Posterior cingulate gyrus (tissue), 11 donors: ENCODE measurements at regions of chrX and their contacts with region 1.

Region 1: DNA sequence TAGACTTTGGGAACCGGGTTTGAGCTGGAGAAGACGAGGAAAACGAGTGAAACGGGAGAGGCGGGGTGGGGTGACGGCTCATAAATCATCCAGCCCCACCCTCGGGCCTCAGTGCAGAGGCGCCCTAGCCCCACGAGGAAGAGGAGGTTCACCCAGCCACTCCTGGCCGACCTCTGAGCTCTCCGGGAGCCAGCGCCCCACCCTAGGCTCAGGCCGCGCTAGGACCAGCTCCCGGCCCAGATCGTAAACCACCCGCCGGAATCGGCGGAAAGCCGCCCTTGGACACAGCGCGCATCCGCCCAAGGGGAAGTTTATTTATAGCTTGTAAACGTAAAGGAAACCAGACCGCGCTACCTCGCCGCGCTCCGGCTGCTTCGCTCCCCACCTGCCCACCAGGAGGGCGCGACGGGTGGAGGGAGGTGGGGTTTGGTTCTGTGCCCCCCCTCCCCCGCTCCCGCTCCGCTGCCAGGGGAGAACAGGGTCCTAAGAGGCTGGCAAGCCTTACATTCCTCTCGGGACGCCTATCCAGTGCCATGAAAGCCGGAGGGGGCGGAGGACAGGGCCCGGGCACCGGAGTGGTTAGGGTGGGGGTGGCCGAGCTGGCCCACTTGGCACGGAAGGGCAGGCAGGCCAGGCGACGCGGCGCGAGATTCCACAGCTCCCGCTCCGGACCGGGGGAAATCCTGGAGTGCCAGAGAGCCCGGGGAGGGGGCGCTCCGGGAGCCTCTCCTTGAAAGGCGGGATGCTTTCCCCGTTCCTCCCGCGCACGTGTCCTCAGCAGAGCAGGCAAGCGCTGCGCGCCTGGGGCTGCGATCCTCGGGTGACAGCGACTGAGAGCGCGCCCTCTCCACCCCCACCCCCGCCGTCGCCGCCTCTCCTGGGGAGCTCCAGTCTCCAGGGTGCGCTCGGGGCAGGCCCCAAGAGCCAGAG is 84.2 kb downstream of the BCOR start:
- DNase-seq: peak in 8 of 10 donors; percentile 30 to 93 (median 54)

Region 2: DNA sequence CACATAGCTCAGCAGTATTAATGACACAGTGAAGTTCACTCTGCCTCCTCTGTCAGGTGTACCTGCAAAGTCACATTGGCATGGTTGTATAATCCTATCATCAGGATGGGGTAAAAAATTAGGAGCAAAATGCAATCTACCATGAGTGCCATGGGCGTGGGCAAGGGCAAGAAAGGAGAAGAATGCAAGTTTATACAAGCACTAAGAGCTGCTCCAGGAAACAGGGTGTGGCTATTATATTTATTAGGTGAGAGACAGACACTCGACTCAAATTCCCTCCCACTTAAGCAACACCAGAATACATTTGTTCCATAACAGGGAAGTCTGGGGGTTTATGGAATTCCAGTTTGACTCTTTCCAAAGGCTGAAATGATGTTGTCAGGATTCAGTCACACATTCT is 294.6 kb before region 1 on chrX:
- intact Hi-C with region 1: no loop called
- DNase-seq: no peak

Region 3: DNA sequence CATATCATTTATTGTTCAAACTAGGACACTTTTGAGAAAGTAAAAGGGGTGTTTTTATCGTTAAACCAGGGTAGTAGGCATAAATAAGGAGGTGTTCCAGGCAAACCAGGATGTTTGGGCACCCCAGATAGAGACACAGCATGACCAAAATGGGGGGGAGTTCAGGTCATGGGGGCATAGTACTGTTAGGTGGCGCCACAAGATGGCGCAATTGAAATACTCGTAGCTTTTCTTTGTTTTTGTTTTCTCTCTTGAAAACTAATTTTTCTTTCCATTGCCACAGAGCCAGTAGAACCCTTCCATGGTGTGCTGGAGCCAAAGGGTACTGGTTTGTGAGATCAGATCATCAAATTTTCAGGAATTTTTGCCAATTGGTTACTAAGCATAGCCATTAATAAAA is 199.1 kb before region 1 on chrX:
- intact Hi-C with region 1: loop called (anchors 10 kb)
- DNase-seq: no peak

Region 4: GRCh38 chrX:40097497-40098263 is 84.1 kb after region 1 on chrX and contains the start of gene BCOR:
- intact Hi-C with region 1: loop called (anchors 5 kb)
- DNase-seq: peak in 5 of 10 donors; percentile 55 to 95 (median 88)

Region 5: GRCh38 chrX:40108959-40109287 is 95.4 kb after region 1 on chrX:
- intact Hi-C with region 1: loop called (anchors 5 kb)
- DNase-seq: peak in 7 of 10 donors; percentile 54 to 93 (median 73)

Region 6: DNA sequence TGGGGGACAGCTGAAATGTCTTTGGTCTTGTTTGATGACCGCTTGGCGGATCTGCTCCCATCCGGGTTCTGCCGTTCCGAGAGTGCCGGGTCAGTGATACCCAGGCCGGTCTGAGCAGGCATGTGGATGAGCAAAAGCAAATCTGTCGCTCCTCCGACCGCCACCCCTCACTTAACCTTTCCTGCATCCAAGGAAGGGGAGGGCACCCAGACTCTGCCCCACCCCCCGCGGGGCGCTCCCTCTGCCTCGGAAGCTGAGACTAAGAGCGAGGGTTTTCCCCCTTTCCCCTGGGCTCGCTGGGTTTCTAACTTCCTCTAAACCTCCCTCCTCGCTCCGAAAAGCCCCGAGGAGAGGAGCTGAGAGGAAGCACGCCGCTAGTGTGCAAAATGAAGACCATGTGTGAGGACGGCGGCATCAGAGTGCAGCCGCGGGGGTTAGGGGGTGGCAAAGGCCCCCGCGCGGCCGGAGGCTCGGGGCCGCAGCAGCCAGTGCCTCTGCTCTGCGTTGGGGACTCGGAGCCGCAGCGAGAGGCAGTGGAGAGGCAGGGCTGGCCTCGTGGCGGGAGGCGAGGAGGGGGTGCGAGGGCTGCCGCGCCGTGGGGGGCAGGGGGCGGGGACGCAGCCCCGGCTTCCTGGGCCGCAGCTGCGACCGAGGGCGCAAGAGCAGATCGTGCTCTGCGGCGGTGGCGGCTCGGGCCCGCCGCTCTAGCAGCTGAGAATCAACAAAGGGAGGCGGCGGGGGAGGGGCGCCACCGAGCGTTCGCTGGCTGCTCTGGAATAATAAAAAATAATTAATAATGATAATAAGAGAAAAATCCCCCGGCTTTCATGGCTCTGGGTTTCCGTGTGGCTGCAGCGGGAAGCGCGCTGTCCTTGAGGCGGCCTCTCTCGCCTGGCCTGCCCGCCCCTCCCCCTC is 140.1 kb after region 1 on chrX:
- intact Hi-C with region 1: loop called (anchors 10 kb)
- DNase-seq: peak in 5 of 10 donors; percentile 19 to 93 (median 67)